Motor neuron (in vitro differentiated cells): ENCODE measurements at regions of chr6 and their contacts with region 1.

Region 1: DNA sequence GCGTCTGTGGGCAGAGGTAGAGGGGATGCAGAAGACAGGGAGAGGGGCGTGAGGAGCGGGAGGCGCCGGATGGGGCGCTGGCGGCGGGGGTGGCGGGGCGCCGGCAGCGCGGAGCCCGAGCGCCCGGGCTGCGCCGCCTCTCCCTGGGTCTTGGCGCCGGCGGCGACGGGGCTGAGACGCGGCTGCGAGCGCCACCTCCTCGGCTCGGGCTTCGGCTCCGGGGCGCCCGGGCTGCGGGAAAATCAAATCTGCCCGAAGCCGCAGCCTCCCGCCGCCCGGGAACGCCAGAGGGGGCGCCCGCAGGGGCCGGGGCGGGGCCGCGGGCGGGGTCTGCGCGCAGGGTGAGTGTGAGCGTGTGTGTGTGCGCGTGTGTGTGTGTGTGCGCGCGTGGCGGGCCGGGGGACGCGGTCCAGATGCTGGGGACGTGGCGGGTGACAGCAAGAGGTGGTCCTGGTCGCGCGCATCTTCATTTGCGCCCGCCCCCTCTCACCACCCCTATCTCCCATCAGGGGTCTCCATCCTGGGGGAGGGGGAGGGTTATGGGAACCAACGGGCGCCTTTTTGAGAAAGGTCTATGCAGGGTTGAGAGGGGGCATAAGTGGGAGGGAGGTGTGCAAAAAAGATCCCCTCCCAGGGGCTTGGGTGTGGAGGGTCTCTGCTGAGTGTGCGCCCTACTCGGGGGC is 646 bp upstream of the CPNE5 start:
- ATAC-seq: peak; percentile 72 to 80 (median 77)
- H3K4me3 ChIP-seq: peak overlapping the region; percentile 46 to 69 (median 55)
- H3K27ac ChIP-seq: peak overlapping the region; percentile 4 to 6
- H3K4me1 ChIP-seq: peaks cover 14 to 17% of the 10 kb centered on the region in 2 donors

Region 2: GRCh38 chr6:36038120-36038876 is 801.6 kb before region 1 on chr6:
- in situ Hi-C with region 1: no loop called
- ATAC-seq: no peak
- H3K4me3 ChIP-seq: no peak overlapping the region
- H3K27ac ChIP-seq: no peak overlapping the region
- H3K4me1 ChIP-seq: peaks cover 4 to 10% of the 10 kb centered on the region in 2 donors

Region 3: DNA sequence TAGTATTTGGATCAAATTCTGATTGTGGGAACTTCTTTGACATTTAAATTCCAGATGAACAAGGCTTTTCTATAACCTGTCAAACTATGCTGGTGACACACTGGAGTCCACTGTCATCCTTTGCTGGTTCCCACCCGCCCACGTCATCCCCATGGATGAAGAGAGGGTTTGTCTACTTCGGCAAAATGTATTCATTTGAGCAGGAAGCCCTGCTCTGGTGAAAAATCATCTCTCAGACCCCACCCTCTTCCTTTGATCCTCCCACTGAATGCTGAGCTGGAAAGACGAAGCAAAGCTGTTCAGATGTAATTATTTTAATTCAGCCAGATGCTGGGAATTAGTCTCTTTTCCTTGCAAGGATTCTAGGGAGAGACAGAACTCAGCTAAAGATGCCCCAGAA is 51.1 kb before region 1 on chr6:
- in situ Hi-C with region 1: loop called in 1 of 9 experiments (anchors 10 kb)
- ATAC-seq: peak; percentile 36 to 91 (median 62)
- H3K4me3 ChIP-seq: no peak overlapping the region
- H3K27ac ChIP-seq: peak overlapping the region in 1 of 2 donors; percentile 11
- H3K4me1 ChIP-seq: peaks cover 24 to 25% of the 10 kb centered on the region in 2 donors

Region 4: DNA sequence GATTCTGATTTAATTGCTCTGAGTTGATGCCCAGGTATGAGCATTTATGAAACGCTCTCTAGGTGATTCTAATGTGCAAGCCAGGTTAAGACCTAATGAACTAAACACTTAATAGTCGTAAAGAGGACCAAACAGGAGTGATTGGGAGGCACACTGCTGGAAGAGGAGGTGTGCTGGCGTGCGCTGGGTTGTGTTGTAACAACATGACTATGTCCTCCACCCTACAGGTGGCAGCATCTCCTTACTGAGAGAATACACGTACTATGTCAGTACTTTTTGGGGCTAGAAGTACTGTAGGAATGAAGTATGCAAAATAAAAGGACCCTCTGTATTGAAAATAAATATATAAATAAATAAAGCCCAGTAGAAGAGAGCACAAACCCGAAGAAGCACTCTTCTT is 57.7 kb after region 1 on chr6:
- in situ Hi-C with region 1: no loop called
- ATAC-seq: peak in 2 of 8 experiments; percentile 18 to 44
- H3K4me3 ChIP-seq: no peak overlapping the region
- H3K27ac ChIP-seq: no peak overlapping the region
- H3K4me1 ChIP-seq: no peaks in the 10 kb centered on the region